Activated CD4-positive, alpha-beta T cell treated with anti-CD3 and anti-CD28 coated beads for 36 hours (primary cell): ENCODE measurements at regions of chr5 and their contacts with region 1.

Region 1: DNA sequence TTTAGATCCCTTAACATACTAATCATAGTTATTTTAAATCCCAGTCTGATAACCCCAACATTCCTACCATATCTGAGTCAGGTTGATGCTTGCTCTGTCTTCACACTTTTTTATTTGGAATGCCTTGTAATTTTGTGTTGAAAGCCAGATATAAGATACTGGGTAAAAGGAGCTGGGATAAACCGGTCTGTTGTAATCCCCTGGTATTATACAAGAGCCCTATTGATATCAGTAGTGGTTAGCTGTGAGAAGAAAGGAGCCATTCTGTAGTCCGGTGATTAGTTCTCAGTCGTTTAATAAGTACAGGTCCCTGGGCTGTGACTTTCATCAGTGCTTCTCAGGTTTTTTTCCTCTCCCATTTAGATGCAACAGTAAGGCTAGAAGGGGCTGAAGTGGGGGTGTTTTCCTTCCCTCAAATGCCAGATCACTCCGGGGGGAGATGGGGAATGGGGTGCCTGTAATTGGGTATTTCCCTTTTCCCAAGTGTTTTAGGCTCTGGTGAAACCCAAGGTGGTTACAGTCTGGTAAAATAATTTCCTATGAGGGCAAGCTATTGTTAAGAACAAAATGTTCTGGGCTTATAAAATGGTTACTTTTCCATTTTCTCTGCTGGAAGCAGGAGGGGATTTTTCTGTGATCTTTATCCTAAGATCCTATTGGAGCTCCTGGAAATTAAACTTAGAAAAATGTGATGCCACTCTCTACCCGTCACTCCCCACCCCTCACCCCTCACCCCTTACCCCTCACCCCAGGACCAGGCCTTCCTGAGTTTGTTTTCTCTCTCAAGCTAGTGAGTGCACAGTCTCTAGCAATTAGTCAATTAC is 72.7 kb downstream of the KCNN2 start:
- DNase-seq: no peak
- ATAC-seq: no peak
- H3K4me3 Mint-ChIP-seq: no peak overlapping the region
- H3K27ac Mint-ChIP-seq: no peak overlapping the region
- H3K4me1 Mint-ChIP-seq: no peaks in the 10 kb centered on the region
- H3K27me3 Mint-ChIP-seq: peaks cover 9% of the 10 kb centered on the region

Region 2: DNA sequence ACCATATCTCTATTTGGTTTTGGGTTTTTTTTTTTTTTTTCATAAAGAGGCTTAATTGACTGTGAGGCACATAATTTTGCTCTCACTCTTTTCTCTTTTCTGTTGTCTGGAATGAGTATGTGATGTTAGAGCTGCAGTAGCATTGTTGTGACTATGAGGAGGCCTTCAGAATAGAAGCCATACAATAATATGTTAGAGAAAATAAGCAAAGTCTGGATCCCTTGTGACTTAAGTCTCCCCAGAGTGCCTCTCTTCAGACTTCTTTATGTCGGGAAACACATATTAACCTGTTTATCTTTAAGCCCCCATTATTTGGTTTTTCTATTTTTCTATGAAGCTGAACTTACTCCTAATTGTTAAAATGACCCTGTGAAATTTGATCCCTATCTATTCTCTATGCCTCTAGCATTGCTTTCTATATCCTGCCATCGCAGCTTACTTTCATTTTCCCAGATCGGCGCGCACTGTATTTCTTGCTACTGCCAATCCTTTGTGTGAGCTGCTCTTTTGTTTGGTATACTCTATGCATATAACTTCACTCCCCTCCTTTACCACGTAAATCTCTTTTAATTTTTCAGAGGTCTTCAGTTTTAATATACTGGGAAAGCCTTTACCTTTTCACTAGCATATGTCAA is 445.2 kb before region 1 on chr5:
- CTCF ChIA-PET with region 1: no interaction called
- POLR2A ChIA-PET with region 1: no interaction called
- intact Hi-C with region 1: loop called in 1 of 2 experiments (anchors 5 kb)
- DNase-seq: no peak
- ATAC-seq: no peak
- H3K4me3 Mint-ChIP-seq: no peak overlapping the region
- H3K27ac Mint-ChIP-seq: no peak overlapping the region
- H3K4me1 Mint-ChIP-seq: no peaks in the 10 kb centered on the region
- H3K27me3 Mint-ChIP-seq: no peaks in the 10 kb centered on the region